CD4-positive, alpha-beta T cell (primary cell): ENCODE measurements at regions of chrX and their contacts with region 1.

Region 1: GRCh38 chrX:49155900-49156837 is 6.4 kb upstream of the MAGIX start:
- DNase-seq: peak; percentile 74 to 92 (median 83)
- ATAC-seq: peak; percentile 91
- H3K4me3 ChIP-seq: peak overlapping the region; percentile 61
- H3K4me3 Mint-ChIP-seq: peak overlapping the region; percentile 94
- H3K27ac ChIP-seq: peak overlapping the region; percentile 65 to 79
- H3K27ac Mint-ChIP-seq: peak overlapping the region; percentile 99
- H3K4me1 ChIP-seq: peaks cover 14% of the 10 kb centered on the region
- H3K4me1 Mint-ChIP-seq: peaks cover 20% of the 10 kb centered on the region
- H3K27me3 ChIP-seq: no peaks in the 10 kb centered on the region
- H3K27me3 Mint-ChIP-seq: no peaks in the 10 kb centered on the region
- CTCF ChIP-seq: peak; percentile 61

Region 2: GRCh38 chrX:49079489-49080428 is 76.4 kb before region 1 on chrX and contains the start of gene WDR45:
- CTCF ChIA-PET with region 1: no interaction called
- POLR2A ChIA-PET with region 1: interaction called, 10 read pairs
- intact Hi-C with region 1: no loop called
- DNase-seq: peak; percentile 38 to 87 (median 67)
- ATAC-seq: peak; percentile 82
- H3K4me3 ChIP-seq: peak within 1 kb of the TSS; percentile 82
- H3K4me3 Mint-ChIP-seq: peak within 1 kb of the TSS; percentile 97
- H3K27ac ChIP-seq: peak within 1 kb of the TSS; percentile 92 to 96
- H3K27ac Mint-ChIP-seq: peak within 1 kb of the TSS; percentile 100
- H3K4me1 ChIP-seq: peaks cover 13% of the 10 kb centered on the region
- H3K4me1 Mint-ChIP-seq: peaks cover 12% of the 10 kb centered on the region
- H3K27me3 ChIP-seq: no peaks in the 10 kb centered on the region
- H3K27me3 Mint-ChIP-seq: no peaks in the 10 kb centered on the region
- CTCF ChIP-seq: no peak
- total RNA-seq, gene WDR45: 74.8 to 78.7 TPM